ENCODE measurements at regions of chr10 and their contacts with region 1.

Region 1: GRCh38 chr10:44857363-44858016 is 53.6 kb upstream of the TMEM72 start:
- DNase-seq: peak; percentile 51
- H3K4me3 ChIP-seq: no peak overlapping the region
- H3K27ac ChIP-seq: no peak overlapping the region
- H3K4me1 ChIP-seq: no peaks in the 10 kb centered on the region
- H3K27me3 ChIP-seq: no peaks in the 10 kb centered on the region
- CTCF ChIP-seq: peak; percentile 86 to 99 (median 97)
- EP300 ChIP-seq: no peak
- POLR2A ChIP-seq: no peak

Region 2: DNA sequence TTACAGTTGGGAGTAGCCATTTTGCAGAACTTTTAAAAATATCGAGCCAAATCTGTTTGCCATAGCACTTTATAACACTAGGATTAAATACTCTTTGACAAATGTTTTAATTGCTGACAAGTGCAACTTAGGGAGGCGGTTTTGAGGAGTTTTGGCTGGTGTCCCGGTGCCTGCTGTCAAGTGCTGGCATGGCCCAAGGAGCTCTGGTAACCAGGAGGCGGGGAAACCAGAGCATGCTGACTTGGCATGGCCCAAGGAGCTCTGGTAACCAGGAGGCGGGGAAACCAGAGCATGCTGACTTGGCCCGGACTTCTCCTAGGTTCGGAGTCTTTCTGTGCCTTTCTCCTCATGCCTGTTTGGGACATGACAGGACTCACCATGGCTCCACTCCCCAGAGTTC is 1178.0 kb before region 1 on chr10:
- in situ Hi-C with region 1: loop called (anchors 5 to 10 kb)
- intact Hi-C with region 1: loop called (anchors 5 kb)
- DNase-seq: peak; percentile 44
- H3K4me3 ChIP-seq: no peak overlapping the region
- H3K27ac ChIP-seq: no peak overlapping the region
- H3K4me1 ChIP-seq: no peaks in the 10 kb centered on the region
- H3K27me3 ChIP-seq: no peaks in the 10 kb centered on the region
- CTCF ChIP-seq: no peak
- EP300 ChIP-seq: no peak
- POLR2A ChIP-seq: no peak

Region 3: GRCh38 chr10:44398747-44399658 is 458.5 kb before region 1 on chr10:
- in situ Hi-C with region 1: loop called in 3 of 4 experiments (anchors 25 kb)
- intact Hi-C with region 1: loop called (anchors 10 kb)
- DNase-seq: no peak
- H3K4me3 ChIP-seq: no peak overlapping the region
- H3K27ac ChIP-seq: no peak overlapping the region
- H3K4me1 ChIP-seq: peaks cover 0 to 4% (median 0%) of the 10 kb centered on the region in 4 donors
- H3K27me3 ChIP-seq: no peaks in the 10 kb centered on the region
- CTCF ChIP-seq: no peak
- EP300 ChIP-seq: no peak
- POLR2A ChIP-seq: no peak